ENCODE measurements at regions of chr1 and their contacts with region 1.

Region 1: GRCh38 chr1:45499415-45499769 is 481 bp downstream of the CCDC163 start:
- DNase-seq: no peak
- ATAC-seq: no peak
- H3K4me3 Mint-ChIP-seq: peak overlapping the region; percentile 97
- H3K27ac Mint-ChIP-seq: peak overlapping the region; percentile 88
- H3K4me1 Mint-ChIP-seq: peaks cover 27% of the 10 kb centered on the region
- H3K27me3 Mint-ChIP-seq: no peaks in the 10 kb centered on the region
- CTCF ChIP-seq: no peak

Region 2: GRCh38 chr1:44985747-44986359 is 513.5 kb before region 1 on chr1:
- CTCF ChIA-PET with region 1: no interaction called
- POLR2A ChIA-PET with region 1: no interaction called
- intact Hi-C with region 1: no loop called
- DNase-seq: no peak
- ATAC-seq: no peak
- H3K4me3 Mint-ChIP-seq: peak overlapping the region; percentile 100
- H3K27ac Mint-ChIP-seq: peak overlapping the region; percentile 94
- H3K4me1 Mint-ChIP-seq: peaks cover 23% of the 10 kb centered on the region
- H3K27me3 Mint-ChIP-seq: no peaks in the 10 kb centered on the region
- CTCF ChIP-seq: no peak

Region 3: GRCh38 chr1:45339789-45340570 is 159.4 kb before region 1 on chr1 and contains the starts of genes MUTYH and TOE1:
- CTCF ChIA-PET with region 1: interaction called, 6 read pairs
- POLR2A ChIA-PET with region 1: interaction called, 34 read pairs
- intact Hi-C with region 1: loop called (anchors 1 kb)
- DNase-seq: peak; percentile 85
- ATAC-seq: peak; percentile 86
- H3K4me3 Mint-ChIP-seq: peak within 1 kb of the TSS; percentile 100
- H3K27ac Mint-ChIP-seq: peak within 1 kb of the TSS; percentile 99
- H3K4me1 Mint-ChIP-seq: peaks cover 39% of the 10 kb centered on the region
- H3K27me3 Mint-ChIP-seq: no peaks in the 10 kb centered on the region
- CTCF ChIP-seq: no peak
- total RNA-seq, gene MUTYH: 61.0 and 63.0 TPM in 2 replicates
- total RNA-seq, gene TOE1: 24.6 and 25.3 TPM in 2 replicates

Region 4: DNA sequence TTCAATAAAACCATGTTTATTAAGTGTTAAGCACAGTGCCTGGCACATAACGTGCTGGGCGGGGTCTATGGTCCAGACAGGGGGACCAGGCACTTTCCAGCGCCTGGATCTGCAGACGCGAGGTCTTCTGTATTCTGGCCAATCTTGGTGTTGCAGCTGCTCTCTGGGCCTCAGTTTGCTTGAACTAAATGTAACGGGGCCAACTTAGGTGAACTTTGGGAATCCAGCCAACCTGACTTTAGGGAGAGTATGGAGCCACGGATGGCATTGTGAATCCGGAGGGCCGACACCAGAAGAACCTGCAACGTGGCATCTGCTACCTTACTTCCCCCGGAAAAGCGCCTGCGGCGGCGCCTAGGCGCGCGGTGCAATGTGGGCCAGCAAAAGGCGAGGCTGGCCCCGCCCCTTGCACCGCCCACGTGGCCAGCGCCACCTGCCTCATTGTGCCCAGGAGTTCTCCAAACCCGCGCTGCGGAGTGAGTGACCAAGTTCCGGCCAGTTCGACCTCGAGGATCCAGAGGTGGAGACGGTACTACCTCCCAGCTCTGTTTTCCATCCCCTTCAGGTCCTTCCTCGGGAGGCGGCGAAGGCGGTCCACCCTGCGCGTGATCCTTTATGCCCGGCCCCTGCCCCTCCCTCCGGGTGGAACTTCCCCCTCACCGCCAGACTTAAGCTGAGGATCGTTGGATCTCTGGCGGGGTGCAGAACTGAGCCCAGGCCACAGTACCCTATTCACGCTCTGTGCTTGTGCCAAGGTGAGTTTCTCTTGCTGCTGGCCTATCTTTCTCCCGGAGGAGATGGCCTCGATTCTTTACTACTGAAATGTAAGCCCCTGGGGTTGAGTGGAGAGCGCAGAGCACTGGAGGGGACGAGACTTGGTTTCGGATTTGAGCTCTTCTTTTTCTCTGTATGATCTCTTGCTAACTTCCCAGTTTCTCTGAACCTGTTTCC is 51.3 kb after region 1 on chr1 and contains the start of gene AKR1A1:
- CTCF ChIA-PET with region 1: no interaction called
- POLR2A ChIA-PET with region 1: interaction called, 15 read pairs
- intact Hi-C with region 1: loop called (anchors 1 kb)
- DNase-seq: peak; percentile 91
- ATAC-seq: peak; percentile 91
- H3K4me3 Mint-ChIP-seq: peak within 1 kb of the TSS; percentile 99
- H3K27ac Mint-ChIP-seq: peak within 1 kb of the TSS; percentile 95
- H3K4me1 Mint-ChIP-seq: peaks cover 35% of the 10 kb centered on the region
- H3K27me3 Mint-ChIP-seq: no peaks in the 10 kb centered on the region
- CTCF ChIP-seq: no peak
- total RNA-seq, gene AKR1A1: 215 and 218 TPM in 2 replicates

Region 5: DNA sequence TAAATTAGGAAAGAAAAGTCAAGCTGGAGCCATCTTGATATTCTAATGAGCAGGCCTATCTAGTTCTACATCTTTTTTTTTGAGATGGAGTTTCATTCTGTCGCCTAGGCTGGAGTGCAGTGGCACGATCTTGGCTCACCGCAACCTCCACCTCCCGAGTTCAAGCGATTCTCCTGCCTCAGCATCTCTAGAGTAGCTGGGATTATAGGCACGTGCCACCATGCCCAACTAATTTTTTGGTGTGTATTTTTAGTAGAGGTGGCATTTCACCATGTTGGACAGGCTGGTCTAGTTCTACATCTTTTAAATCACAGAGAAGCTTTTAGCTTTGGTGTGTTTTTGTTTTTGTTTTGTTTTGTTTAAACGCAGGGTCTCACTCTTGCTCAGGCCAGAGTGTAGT is 195.4 kb after region 1 on chr1:
- CTCF ChIA-PET with region 1: no interaction called
- POLR2A ChIA-PET with region 1: no interaction called
- intact Hi-C with region 1: no loop called
- DNase-seq: no peak
- ATAC-seq: no peak
- H3K4me3 Mint-ChIP-seq: no peak overlapping the region
- H3K27ac Mint-ChIP-seq: no peak overlapping the region
- H3K4me1 Mint-ChIP-seq: peaks cover 3% of the 10 kb centered on the region
- H3K27me3 Mint-ChIP-seq: no peaks in the 10 kb centered on the region
- CTCF ChIP-seq: no peak